Right lobe of liver (tissue), 6 donors: ENCODE measurements at regions of chr14 and their contacts with region 1.

Region 1: GRCh38 chr14:23379366-23380196 is 2.7 kb downstream of the CMTM5 start:
- DNase-seq: peak; percentile 76 to 82 (median 78)
- ATAC-seq: peak; percentile 90 to 98 (median 96)
- H3K4me3 ChIP-seq: no peak overlapping the region
- H3K27ac ChIP-seq: no peak overlapping the region
- H3K4me1 ChIP-seq: no peaks in the 10 kb centered on the region
- H3K27me3 ChIP-seq: no peaks in the 10 kb centered on the region
- CTCF ChIP-seq: peak; percentile 90 to 95 (median 94)
- POLR2A ChIP-seq: no peak

Region 2: GRCh38 chr14:23120541-23121251 is 258.9 kb before region 1 on chr14:
- intact Hi-C with region 1: loop called in 1 of 2 experiments (anchors 10 kb)
- DNase-seq: peak; percentile 89 to 91 (median 90)
- ATAC-seq: peak; percentile 96 to 99 (median 98)
- H3K4me3 ChIP-seq: no peak overlapping the region
- H3K27ac ChIP-seq: no peak overlapping the region
- H3K4me1 ChIP-seq: no peaks in the 10 kb centered on the region
- H3K27me3 ChIP-seq: no peaks in the 10 kb centered on the region
- CTCF ChIP-seq: peak; percentile 100
- POLR2A ChIP-seq: no peak

Region 3: DNA sequence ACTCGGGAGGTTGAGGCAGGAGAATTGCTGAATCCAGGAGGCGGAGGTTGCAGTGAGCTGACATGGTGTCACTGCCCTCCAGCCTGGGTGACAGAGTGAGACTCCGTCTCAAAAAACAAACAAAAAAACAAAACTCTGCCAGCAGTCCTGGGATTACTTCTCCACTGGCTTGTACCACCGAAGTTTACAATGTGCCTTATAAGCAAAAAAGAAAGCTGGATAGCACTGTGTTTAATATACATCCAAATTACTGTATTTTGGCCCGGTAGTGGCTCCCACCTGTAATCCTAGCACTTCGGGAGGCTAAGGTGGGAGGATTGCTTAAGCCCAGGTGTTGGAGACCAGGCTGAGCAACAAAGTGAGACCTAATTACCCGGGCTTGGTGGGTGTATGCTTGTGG is 110.4 kb before region 1 on chr14:
- intact Hi-C with region 1: loop called (anchors 5 to 10 kb)
- DNase-seq: no peak
- ATAC-seq: no peak
- H3K4me3 ChIP-seq: no peak overlapping the region
- H3K27ac ChIP-seq: no peak overlapping the region
- H3K4me1 ChIP-seq: no peaks in the 10 kb centered on the region
- H3K27me3 ChIP-seq: no peaks in the 10 kb centered on the region
- CTCF ChIP-seq: no peak
- POLR2A ChIP-seq: no peak

Region 4: DNA sequence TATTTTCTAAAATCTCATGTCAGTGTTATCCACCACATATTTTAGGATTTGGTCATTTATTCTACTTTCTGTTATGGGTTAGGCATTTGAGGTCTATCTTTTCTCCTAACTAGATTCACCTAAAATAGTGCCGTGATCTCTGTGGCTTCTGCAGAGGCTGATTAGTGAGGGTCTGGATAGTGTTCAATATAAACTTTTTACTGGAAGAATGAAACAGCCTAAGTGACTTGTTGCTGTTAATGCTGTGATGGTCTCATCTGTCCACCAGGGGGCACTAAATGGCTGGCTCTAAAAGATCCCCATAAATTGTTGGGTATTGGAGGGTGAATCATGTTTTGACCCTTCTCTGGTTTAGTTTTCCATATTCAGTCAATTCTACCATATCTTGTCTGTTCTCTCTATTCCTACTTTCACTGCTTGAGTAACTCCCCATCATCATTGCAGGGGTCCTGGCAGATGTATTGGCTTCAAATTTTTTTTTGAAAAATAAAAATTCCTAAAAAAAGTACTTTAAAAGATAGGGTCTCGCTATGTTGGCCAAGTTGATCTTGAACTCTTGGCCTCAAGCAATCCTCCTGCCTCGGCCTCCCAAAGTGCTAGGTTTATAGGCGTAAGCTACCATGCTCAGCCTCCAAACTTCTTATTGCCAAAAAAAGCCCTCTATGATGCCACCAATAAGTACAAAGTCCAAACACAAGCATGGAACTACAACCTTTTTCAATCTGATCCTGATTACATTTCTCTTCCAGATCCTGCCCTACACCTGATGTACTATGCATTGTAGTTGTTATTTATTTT is 51.4 kb before region 1 on chr14:
- intact Hi-C with region 1: loop called (anchors 5 kb)
- DNase-seq: peak in 1 of 3 donors; percentile 65
- ATAC-seq: peak; percentile 86 to 95 (median 90)
- H3K4me3 ChIP-seq: no peak overlapping the region
- H3K27ac ChIP-seq: peak overlapping the region in 1 of 3 donors; percentile 28
- H3K4me1 ChIP-seq: peaks cover 0 to 7% (median 0%) of the 10 kb centered on the region in 4 donors
- H3K27me3 ChIP-seq: no peaks in the 10 kb centered on the region
- CTCF ChIP-seq: peak; percentile 87 to 93 (median 90)
- POLR2A ChIP-seq: no peak

Region 5: GRCh38 chr14:23446291-23446851 is 66.8 kb after region 1 on chr14:
- intact Hi-C with region 1: no loop called
- DNase-seq: no peak
- ATAC-seq: peak in 1 of 4 donors; percentile 18
- H3K4me3 ChIP-seq: no peak overlapping the region
- H3K27ac ChIP-seq: no peak overlapping the region
- H3K4me1 ChIP-seq: no peaks in the 10 kb centered on the region
- H3K27me3 ChIP-seq: no peaks in the 10 kb centered on the region
- CTCF ChIP-seq: no peak
- POLR2A ChIP-seq: no peak

Region 6: DNA sequence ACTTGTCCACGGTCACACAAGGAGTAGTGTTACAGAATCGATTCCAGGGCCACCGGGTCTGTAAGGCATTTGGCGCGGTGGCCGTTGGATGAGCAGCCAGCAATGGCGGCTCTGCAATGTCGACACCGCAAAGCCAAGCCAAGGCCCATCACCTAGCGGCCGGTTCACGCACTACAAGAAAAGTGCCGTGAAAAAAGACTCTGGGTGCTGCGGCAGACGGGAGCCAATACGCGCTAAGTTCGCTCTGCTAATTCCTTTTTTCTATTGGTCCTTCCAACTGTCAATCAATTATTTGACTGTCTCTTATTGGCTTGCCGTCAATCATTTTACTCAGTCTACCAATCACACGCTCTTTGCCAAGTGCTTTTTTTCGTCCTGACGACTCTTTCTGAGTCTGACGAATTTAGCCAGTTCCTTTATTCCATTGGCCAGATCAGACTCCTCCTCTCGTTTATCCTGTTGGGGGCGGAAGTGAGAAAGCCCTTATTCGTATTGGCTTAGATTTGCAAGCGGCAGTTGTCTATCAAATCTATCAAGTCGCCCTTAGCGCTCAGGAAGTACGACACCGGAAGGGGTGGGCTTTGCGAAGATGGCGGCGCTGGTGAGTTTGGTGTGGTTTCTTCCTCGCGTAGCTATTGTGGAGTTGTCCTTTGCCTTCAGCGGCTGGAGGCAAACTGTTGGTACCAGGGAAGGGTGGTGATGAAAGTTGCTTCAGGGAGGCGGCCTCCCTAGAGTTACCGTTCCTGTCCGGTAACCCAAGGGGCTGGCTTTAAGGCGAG is 89.7 kb after region 1 on chr14 and contains the start of gene NGDN:
- intact Hi-C with region 1: no loop called
- DNase-seq: peak; percentile 87 to 94 (median 93)
- ATAC-seq: peak; percentile 95 to 98 (median 96)
- H3K4me3 ChIP-seq: peak within 1 kb of the TSS; percentile 83 to 92 (median 85)
- H3K27ac ChIP-seq: peak within 1 kb of the TSS; percentile 45 to 70 (median 64)
- H3K4me1 ChIP-seq: peaks cover 0 to 7% (median 2%) of the 10 kb centered on the region in 4 donors
- H3K27me3 ChIP-seq: no peaks in the 10 kb centered on the region
- CTCF ChIP-seq: peak; percentile 73 to 89 (median 76)
- POLR2A ChIP-seq: peak; percentile 65
- total RNA-seq, gene NGDN: 12.0 to 16.5 (median 14.3) TPM

Region 7: GRCh38 chr14:23653066-23653465 is 273.5 kb after region 1 on chr14:
- intact Hi-C with region 1: no loop called
- DNase-seq: no peak
- ATAC-seq: no peak
- H3K4me3 ChIP-seq: no peak overlapping the region
- H3K27ac ChIP-seq: no peak overlapping the region
- H3K4me1 ChIP-seq: no peaks in the 10 kb centered on the region
- H3K27me3 ChIP-seq: no peaks in the 10 kb centered on the region
- CTCF ChIP-seq: no peak
- POLR2A ChIP-seq: no peak